Dendritic cell treated with granulocyte-macrophage colony-stimulating factor and Interleukin-4, amounts not matched to agents 40 ng/mL and 50 ng/mL, for 4 days (primary cell): ENCODE measurements at regions of chr1 and their contacts with region 1.

Region 1: DNA sequence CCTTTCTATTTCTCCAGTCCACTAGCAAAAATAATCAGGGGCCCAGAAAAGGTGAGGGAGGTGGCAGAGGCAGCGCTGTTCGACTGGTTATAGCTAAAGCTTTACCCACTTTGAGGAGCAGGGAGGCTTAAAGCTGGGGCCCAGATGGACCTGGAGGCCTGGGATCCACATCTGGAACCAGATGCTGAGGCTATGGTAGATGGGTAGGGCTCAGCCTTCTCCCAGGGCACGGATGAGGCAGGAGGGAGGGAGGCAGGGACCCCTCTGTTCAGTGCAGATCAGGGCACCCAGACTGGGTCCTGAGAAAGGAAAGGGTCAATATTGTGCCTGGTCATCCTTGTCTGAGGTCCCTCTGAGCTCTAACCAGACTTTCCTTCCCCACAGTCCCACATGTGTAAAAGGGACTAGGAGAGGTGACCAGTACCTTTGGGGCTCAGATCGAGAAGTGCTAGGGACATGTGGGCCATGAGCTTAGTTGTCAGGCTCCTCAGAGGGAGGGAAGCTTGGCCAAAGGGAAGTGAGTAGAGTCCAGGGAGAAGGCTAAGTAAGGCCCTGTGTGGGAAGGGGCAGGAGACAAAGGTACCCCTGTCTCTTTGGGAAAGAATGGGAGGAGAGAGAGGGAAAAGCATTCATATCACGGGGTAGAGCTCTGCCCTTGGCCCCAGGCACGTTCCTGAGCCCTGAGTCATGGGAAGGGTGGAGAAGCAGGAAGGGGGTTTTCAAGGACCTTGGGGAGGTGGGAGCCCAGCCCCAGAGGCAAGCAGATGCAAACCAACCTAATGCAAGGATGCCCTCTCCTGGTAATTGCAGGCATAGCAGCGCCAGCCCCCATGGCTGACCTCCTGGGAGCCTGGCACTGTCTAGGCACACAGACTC is 15.4 kb downstream of the LMNA start:
- H3K4me3 Mint-ChIP-seq: peak overlapping the region; percentile 7
- H3K27ac Mint-ChIP-seq: peak overlapping the region; percentile 95
- H3K4me1 Mint-ChIP-seq: peaks cover 55% of the 10 kb centered on the region
- H3K27me3 Mint-ChIP-seq: peaks cover 38% of the 10 kb centered on the region

Region 2: GRCh38 chr1:156090822-156091188 is 39.1 kb before region 1 on chr1:
- intact Hi-C with region 1: loop called (anchors 1 kb)
- H3K4me3 Mint-ChIP-seq: peak overlapping the region; percentile 48
- H3K27ac Mint-ChIP-seq: peak overlapping the region; percentile 78
- H3K4me1 Mint-ChIP-seq: peaks cover 54% of the 10 kb centered on the region
- H3K27me3 Mint-ChIP-seq: peaks cover 61% of the 10 kb centered on the region

Region 3: DNA sequence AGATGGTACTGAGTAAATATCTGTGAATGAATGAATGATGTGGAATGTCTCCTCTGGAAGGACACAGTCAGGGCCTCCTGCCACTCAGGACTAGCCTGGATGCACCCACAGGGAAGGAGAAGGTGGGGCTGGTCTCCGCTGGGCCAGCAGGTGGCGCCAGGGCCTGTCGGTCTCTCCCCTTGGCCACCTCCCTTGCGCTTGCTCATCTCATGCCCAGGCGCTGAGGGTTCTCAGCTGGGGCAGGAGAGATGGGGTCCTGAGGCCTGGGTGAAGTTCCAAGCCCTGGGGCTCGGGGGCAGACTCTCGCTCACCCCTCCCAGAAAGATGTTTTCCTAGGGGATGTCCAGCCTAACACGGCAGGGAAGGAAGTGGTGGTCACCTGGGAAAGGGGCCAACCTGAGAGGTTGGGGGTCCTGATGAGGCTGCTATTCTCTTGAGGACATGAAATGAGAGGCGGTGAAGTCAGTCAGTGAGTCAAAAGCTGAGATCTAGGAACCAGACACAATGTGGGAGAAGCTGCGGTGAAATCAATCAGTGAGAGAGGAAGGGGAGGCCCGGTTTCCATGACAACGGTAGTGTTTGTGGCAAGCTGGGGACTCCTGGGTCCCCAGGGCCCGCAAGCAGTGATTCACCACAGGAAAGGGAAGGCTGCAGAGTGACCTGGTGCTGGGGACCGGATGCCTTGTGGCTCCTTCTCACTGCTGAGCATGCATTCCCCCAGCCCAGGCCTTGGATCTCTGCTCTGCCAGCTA is 33.1 kb before region 1 on chr1:
- intact Hi-C with region 1: loop called (anchors 1 kb)
- H3K4me3 Mint-ChIP-seq: peak overlapping the region; percentile 51
- H3K27ac Mint-ChIP-seq: peak overlapping the region; percentile 86
- H3K4me1 Mint-ChIP-seq: peaks cover 62% of the 10 kb centered on the region
- H3K27me3 Mint-ChIP-seq: peaks cover 75% of the 10 kb centered on the region

Region 4: GRCh38 chr1:156106624-156107488 is 23.1 kb before region 1 on chr1:
- intact Hi-C with region 1: loop called (anchors 1 kb)
- H3K4me3 Mint-ChIP-seq: peak overlapping the region; percentile 33
- H3K27ac Mint-ChIP-seq: peak overlapping the region; percentile 95
- H3K4me1 Mint-ChIP-seq: peaks cover 66% of the 10 kb centered on the region
- H3K27me3 Mint-ChIP-seq: peaks cover 51% of the 10 kb centered on the region